Endothelial cell of umbilical vein (primary cell): ENCODE measurements at regions of chr6 and their contacts with region 1.

Region 1: DNA sequence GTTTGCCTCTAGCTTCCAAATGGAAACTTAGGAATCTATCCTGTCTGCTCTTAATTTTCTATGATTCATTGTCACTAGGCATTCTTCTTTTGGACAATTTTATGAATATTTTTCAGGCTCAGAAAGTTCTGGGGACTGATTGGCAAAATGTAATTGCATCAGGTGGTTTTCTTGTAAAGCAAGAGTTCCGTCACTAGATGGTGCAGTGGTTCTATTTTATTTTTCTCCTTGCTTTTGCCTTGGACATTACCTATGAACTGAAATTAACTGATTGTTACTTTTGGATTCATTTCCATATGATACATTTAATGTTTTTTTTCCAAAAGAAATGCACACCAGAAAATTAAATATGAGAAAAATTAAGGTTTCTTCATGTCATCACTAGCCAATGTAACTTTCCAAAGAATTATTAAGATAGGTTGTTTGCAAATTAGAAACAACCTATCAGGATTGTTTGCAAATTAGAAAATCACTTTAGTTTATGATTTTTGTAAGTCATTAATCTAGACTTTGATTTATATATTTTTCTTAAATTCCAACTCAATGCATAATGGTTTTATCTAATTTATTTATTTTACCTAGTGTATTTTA is 48.0 kb downstream of the TMEM170B start:
- DNase-seq: peak; percentile 83
- H3K4me3 ChIP-seq: no peak overlapping the region
- H3K27ac ChIP-seq: peak overlapping the region; percentile 79
- H3K4me1 ChIP-seq: peaks cover 29% of the 10 kb centered on the region
- H3K27me3 ChIP-seq: no peaks in the 10 kb centered on the region
- CTCF ChIP-seq: peak; percentile 41 to 42
- POLR2A ChIP-seq: no peak

Region 2: DNA sequence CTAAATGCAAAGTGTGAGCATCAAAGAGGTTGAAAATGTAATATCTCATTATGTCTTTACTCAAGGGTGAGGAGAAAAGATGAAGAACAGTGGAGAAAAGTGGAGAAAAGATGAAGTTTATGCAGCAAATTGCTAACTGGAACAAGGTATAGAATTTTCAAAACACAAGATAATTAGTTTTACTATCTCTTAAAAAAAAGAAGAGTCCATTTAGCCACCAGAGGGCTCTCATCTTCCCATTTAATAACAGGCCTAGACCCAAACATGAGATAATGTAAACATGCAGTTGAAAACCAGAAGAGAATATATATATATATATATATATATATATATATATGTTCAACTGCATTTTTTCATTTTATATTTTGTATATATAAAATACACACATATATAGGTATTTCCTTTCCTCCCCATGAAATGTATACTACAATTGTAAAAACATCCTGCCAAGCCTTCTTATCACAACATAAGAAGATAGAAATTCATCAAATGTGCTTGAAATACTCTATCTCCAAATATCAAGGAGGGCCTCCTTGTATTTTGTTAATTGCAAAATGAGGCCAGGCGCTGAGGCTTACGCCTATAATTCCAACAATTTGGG is 114.7 kb after region 1 on chr6:
- CTCF ChIA-PET with region 1: no interaction called
- POLR2A ChIA-PET with region 1: no interaction called
- dilution Hi-C with region 1: no loop called
- intact Hi-C with region 1: loop called (anchors 2 kb)
- DNase-seq: peak; percentile 47
- H3K4me3 ChIP-seq: no peak overlapping the region
- H3K27ac ChIP-seq: no peak overlapping the region
- H3K4me1 ChIP-seq: no peaks in the 10 kb centered on the region
- H3K27me3 ChIP-seq: no peaks in the 10 kb centered on the region
- CTCF ChIP-seq: peak in 1 of 2 donors; percentile 16
- POLR2A ChIP-seq: no peak

Region 3: GRCh38 chr6:11770546-11771466 is 185.3 kb after region 1 on chr6:
- CTCF ChIA-PET with region 1: no interaction called
- POLR2A ChIA-PET with region 1: no interaction called
- dilution Hi-C with region 1: no loop called
- intact Hi-C with region 1: loop called (anchors 5 kb)
- DNase-seq: peak; percentile 93
- H3K4me3 ChIP-seq: no peak overlapping the region
- H3K27ac ChIP-seq: peak overlapping the region; percentile 94
- H3K4me1 ChIP-seq: peaks cover 58% of the 10 kb centered on the region
- H3K27me3 ChIP-seq: no peaks in the 10 kb centered on the region
- CTCF ChIP-seq: no peak
- POLR2A ChIP-seq: peak; percentile 84

Region 4: GRCh38 chr6:12075067-12075563 is 489.6 kb after region 1 on chr6:
- CTCF ChIA-PET with region 1: interaction called, 3 read pairs
- POLR2A ChIA-PET with region 1: no interaction called
- dilution Hi-C with region 1: no loop called
- intact Hi-C with region 1: loop called (anchors 5 kb)
- DNase-seq: peak; percentile 34
- H3K4me3 ChIP-seq: no peak overlapping the region
- H3K27ac ChIP-seq: no peak overlapping the region
- H3K4me1 ChIP-seq: peaks cover 22% of the 10 kb centered on the region
- H3K27me3 ChIP-seq: no peaks in the 10 kb centered on the region
- CTCF ChIP-seq: peak; percentile 13 to 18
- POLR2A ChIP-seq: no peak